AG04450 (cell line): ENCODE measurements at regions of chr4 and their contacts with region 1.

Region 1: GRCh38 chr4:81351654-81352445 is 119.9 kb downstream of the RASGEF1B start:
- DNase-seq: peak; percentile 56
- H3K4me3 ChIP-seq: no peak overlapping the region
- H3K27ac ChIP-seq: no peak overlapping the region
- H3K27me3 ChIP-seq: no peaks in the 10 kb centered on the region
- CTCF ChIP-seq: peak; percentile 98

Region 2: GRCh38 chr4:81069706-81070331 is 282.0 kb before region 1 on chr4:
- CTCF ChIA-PET with region 1: interaction called, 146 read pairs
- POLR2A ChIA-PET with region 1: no interaction called
- DNase-seq: peak; percentile 86
- H3K4me3 ChIP-seq: no peak overlapping the region
- H3K27ac ChIP-seq: no peak overlapping the region
- H3K27me3 ChIP-seq: no peaks in the 10 kb centered on the region
- CTCF ChIP-seq: peak; percentile 96

Region 3: GRCh38 chr4:81109356-81109755 is 242.5 kb before region 1 on chr4:
- CTCF ChIA-PET with region 1: interaction called, 10 read pairs
- POLR2A ChIA-PET with region 1: no interaction called
- DNase-seq: no peak
- H3K4me3 ChIP-seq: no peak overlapping the region
- H3K27ac ChIP-seq: no peak overlapping the region
- H3K27me3 ChIP-seq: no peaks in the 10 kb centered on the region
- CTCF ChIP-seq: no peak

Region 4: GRCh38 chr4:81180916-81181315 is 170.9 kb before region 1 on chr4:
- CTCF ChIA-PET with region 1: interaction called, 16 read pairs
- POLR2A ChIA-PET with region 1: no interaction called
- DNase-seq: no peak
- H3K4me3 ChIP-seq: no peak overlapping the region
- H3K27ac ChIP-seq: no peak overlapping the region
- H3K27me3 ChIP-seq: no peaks in the 10 kb centered on the region
- CTCF ChIP-seq: no peak

Region 5: DNA sequence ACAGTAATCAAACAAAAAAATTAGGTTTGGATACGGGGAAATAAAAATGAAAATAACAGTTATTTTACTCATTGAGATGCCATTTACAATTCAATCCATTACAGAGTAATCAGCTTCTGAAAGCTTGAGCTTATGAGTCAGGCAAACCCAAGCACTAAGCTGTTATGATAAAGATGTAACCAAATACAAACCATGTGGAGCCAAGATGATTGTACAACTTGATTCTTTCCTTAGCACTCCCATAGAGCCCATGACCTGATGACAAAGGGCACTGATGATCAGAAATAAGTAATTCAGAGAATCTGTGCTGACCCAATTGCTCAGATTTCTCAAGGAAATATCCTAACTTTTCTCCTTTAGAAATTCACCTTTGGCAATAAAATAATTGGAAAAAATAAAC is 96.3 kb before region 1 on chr4:
- CTCF ChIA-PET with region 1: interaction called, 13 read pairs
- POLR2A ChIA-PET with region 1: interaction called, 5 read pairs
- DNase-seq: peak; percentile 66
- H3K4me3 ChIP-seq: no peak overlapping the region
- H3K27ac ChIP-seq: no peak overlapping the region
- H3K27me3 ChIP-seq: no peaks in the 10 kb centered on the region
- CTCF ChIP-seq: no peak

Region 6: GRCh38 chr4:81314196-81314896 is 37.5 kb before region 1 on chr4:
- CTCF ChIA-PET with region 1: interaction called, 85 read pairs
- POLR2A ChIA-PET with region 1: interaction called, 5 read pairs
- DNase-seq: peak; percentile 75
- H3K4me3 ChIP-seq: no peak overlapping the region; the same call in 1 of the 2 replicates
- H3K27ac ChIP-seq: peak overlapping the region; percentile 73
- H3K27me3 ChIP-seq: no peaks in the 10 kb centered on the region
- CTCF ChIP-seq: no peak

Region 7: DNA sequence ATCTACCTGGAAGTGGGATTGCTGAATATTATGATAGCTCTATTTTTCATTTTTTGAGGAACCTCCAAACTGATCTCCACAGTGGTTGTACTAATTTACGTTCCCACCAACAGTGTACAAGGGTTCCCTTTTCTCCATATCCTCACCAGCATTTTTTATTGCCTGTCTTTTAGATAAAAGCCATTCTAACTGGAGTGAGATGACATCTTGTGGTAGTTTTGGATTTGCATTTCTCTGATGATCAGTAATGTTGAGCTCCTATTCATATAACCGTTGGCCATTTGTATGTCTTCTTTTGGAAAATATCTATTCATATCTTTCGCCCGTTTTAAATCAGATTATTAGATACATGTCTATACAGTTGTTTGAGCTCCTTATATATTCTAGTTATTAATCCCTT is 18.0 kb after region 1 on chr4:
- CTCF ChIA-PET with region 1: interaction called, 19 read pairs
- POLR2A ChIA-PET with region 1: no interaction called
- DNase-seq: no peak
- H3K4me3 ChIP-seq: no peak overlapping the region
- H3K27ac ChIP-seq: no peak overlapping the region
- H3K27me3 ChIP-seq: no peaks in the 10 kb centered on the region
- CTCF ChIP-seq: peak; percentile 34

Region 8: GRCh38 chr4:81482326-81482725 is 130.5 kb after region 1 on chr4:
- CTCF ChIA-PET with region 1: no interaction called
- POLR2A ChIA-PET with region 1: no interaction called
- DNase-seq: no peak
- H3K4me3 ChIP-seq: no peak overlapping the region
- H3K27ac ChIP-seq: no peak overlapping the region
- H3K27me3 ChIP-seq: peaks cover 2% of the 10 kb centered on the region
- CTCF ChIP-seq: no peak

Region 9: GRCh38 chr4:81577392-81577791 is 225.5 kb after region 1 on chr4:
- CTCF ChIA-PET with region 1: no interaction called
- POLR2A ChIA-PET with region 1: no interaction called
- DNase-seq: no peak
- H3K4me3 ChIP-seq: no peak overlapping the region
- H3K27ac ChIP-seq: no peak overlapping the region
- H3K27me3 ChIP-seq: no peaks in the 10 kb centered on the region
- CTCF ChIP-seq: no peak

Region 10: GRCh38 chr4:81970454-81970853 is 618.6 kb after region 1 on chr4:
- CTCF ChIA-PET with region 1: no interaction called
- POLR2A ChIA-PET with region 1: no interaction called
- DNase-seq: no peak
- H3K4me3 ChIP-seq: no peak overlapping the region
- H3K27ac ChIP-seq: no peak overlapping the region
- H3K27me3 ChIP-seq: no peaks in the 10 kb centered on the region
- CTCF ChIP-seq: no peak

Region 11: GRCh38 chr4:82017680-82018079 is 665.8 kb after region 1 on chr4:
- CTCF ChIA-PET with region 1: no interaction called
- POLR2A ChIA-PET with region 1: no interaction called
- DNase-seq: no peak
- H3K4me3 ChIP-seq: no peak overlapping the region
- H3K27ac ChIP-seq: no peak overlapping the region
- H3K27me3 ChIP-seq: no peaks in the 10 kb centered on the region
- CTCF ChIP-seq: no peak